Activated CD4-positive, alpha-beta T cell treated with anti-CD3 and anti-CD28 coated beads, Interleukin-2, amount 10 ng/mL, durations not matched to agents 7 days and 5 days (primary cell): ENCODE measurements at regions of chr3 and their contacts with region 1.

Region 1: GRCh38 chr3:152256851-152257562 is 11.7 kb upstream of the MBNL1 start:
- DNase-seq: no peak
- H3K4me3 Mint-ChIP-seq: peak overlapping the region; percentile 56
- H3K27ac Mint-ChIP-seq: peak overlapping the region; percentile 90
- H3K4me1 Mint-ChIP-seq: peaks cover 90% of the 10 kb centered on the region
- H3K27me3 Mint-ChIP-seq: no peaks in the 10 kb centered on the region

Region 2: DNA sequence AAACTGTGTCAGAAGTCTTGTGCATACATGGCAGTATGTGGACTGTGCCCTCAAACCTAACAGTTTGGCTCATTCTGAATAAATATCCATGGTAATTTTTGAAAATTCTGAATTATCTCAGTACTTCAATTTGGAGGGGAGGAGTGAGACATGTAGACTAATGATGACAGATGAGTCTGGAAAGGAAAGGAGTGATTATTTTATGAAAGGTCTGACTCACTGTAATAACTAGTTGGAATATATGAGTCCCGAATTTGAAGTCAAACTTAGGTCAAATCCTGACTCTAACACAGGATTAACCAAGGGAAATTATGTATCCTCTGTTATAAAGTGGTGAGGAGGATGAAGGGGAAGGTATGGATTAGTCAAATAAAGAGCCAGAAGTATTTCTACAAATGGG is 345.0 kb before region 1 on chr3:
- CTCF ChIA-PET with region 1: no interaction called
- POLR2A ChIA-PET with region 1: no interaction called
- DNase-seq: no peak
- H3K4me3 Mint-ChIP-seq: no peak overlapping the region
- H3K27ac Mint-ChIP-seq: no peak overlapping the region
- H3K4me1 Mint-ChIP-seq: no peaks in the 10 kb centered on the region
- H3K27me3 Mint-ChIP-seq: peaks cover 11% of the 10 kb centered on the region

Region 3: DNA sequence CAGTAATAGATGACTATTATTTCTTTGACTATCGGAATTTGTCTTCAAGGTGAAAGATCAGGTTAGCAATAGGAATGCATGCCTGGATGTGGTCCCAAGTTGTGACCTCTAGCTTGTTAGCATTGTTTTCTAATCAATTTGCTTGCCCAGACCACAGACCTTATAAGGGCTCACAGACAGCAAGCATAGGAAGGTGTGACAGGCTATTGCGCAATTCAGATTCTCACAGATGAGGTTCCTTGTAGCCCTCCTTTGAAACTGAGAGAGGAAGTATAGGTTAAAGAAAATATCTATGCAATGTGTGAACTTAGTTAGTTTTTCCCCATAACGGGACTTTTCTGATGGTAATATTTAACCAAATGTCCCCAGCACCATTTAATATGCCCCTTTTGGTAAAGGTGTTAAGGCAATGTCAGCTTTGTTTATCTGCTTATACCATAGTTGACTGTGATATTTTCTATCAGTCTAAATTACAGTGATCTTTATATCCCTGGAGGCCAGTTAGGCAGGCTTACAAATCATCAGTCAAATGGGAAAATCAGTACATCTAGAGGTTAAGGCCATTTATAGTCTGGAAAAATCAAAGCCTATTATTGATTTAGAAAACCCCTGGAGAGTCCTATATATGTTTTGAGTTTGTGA is 156.4 kb before region 1 on chr3:
- CTCF ChIA-PET with region 1: no interaction called
- POLR2A ChIA-PET with region 1: no interaction called
- DNase-seq: peak; percentile 18
- H3K4me3 Mint-ChIP-seq: no peak overlapping the region
- H3K27ac Mint-ChIP-seq: no peak overlapping the region
- H3K4me1 Mint-ChIP-seq: peaks cover 11% of the 10 kb centered on the region
- H3K27me3 Mint-ChIP-seq: peaks cover 11% of the 10 kb centered on the region

Region 4: GRCh38 chr3:152243721-152244516 is 13.1 kb before region 1 on chr3:
- CTCF ChIA-PET with region 1: interaction called, 11 read pairs
- POLR2A ChIA-PET with region 1: interaction called, 4 read pairs
- DNase-seq: peak; percentile 44
- H3K4me3 Mint-ChIP-seq: peak overlapping the region; percentile 99
- H3K27ac Mint-ChIP-seq: peak overlapping the region; percentile 84
- H3K4me1 Mint-ChIP-seq: peaks cover 47% of the 10 kb centered on the region
- H3K27me3 Mint-ChIP-seq: no peaks in the 10 kb centered on the region